Posterior vena cava (tissue), 2 donors: ENCODE measurements at regions of chr1 and their contacts with region 1.

Region 1: GRCh38 chr1:16078925-16079656 is 5.6 kb upstream of the FAM131C start:
- DNase-seq: peak; percentile 89

Region 2: DNA sequence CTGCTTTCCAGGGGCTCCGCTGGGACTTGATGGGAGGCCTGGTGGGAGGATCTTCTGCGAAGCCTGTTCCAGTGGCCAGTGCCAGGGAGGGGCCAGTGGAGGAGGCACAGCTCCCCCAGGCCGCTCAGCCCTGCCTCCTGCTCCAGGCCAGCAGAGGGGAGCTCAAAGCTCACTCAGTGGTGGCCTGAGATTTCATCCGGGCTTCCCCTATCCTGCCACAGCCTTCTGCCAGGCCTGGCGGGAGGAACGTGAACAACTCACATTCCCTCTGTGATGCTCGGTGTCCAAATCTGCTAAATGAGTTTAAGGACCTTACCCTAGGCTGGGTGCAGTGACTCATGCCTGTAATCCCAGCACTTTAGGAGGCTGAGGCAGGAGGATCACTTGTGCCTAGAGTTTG is 32.2 kb before region 1 on chr1:
- intact Hi-C with region 1: no loop called
- DNase-seq: no peak

Region 3: DNA sequence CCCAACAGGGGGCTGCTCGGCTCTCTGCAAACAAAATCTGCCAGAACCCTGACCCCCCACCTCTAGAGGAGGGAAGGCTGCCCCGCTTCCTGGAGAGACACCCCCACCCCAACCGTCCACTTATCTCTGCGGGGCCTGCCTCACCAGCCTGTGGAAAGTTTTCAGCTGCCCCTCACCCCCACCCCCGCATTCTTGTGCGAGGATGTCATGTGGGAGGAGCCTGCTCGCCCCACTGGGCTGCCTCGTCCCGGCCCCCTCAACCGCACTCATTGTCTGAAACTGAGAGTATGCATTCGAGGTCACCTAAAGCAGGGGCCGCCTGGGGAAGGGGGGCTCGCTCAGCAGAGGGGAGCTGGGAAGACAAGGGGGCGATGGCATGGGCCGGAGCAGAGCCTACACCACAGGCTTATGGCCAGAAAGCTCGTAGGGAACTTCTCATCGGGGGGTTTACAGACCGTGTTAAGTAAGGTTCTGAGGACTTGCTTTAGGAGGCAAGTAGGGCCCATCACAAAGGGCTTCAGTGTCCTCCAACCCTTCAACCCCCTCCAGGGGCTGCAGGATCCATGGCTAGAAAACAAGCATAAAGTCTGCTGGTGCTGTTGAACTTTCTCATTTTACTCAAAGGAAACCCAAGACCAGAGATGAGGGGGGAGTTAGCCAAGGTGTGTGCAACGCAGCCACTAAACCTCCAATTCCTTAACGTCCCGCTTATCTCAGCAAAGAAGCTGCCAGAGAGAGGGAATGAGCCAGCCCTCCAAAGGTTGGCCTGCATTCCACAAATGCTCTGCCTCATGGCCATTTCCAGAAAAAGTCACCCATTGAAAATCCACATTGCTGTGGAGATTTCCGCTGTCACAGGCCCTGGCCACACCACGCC is 67.4 kb after region 1 on chr1:
- intact Hi-C with region 1: loop called in 1 of 2 experiments (anchors 5 kb)
- DNase-seq: peak; percentile 91

Region 4: DNA sequence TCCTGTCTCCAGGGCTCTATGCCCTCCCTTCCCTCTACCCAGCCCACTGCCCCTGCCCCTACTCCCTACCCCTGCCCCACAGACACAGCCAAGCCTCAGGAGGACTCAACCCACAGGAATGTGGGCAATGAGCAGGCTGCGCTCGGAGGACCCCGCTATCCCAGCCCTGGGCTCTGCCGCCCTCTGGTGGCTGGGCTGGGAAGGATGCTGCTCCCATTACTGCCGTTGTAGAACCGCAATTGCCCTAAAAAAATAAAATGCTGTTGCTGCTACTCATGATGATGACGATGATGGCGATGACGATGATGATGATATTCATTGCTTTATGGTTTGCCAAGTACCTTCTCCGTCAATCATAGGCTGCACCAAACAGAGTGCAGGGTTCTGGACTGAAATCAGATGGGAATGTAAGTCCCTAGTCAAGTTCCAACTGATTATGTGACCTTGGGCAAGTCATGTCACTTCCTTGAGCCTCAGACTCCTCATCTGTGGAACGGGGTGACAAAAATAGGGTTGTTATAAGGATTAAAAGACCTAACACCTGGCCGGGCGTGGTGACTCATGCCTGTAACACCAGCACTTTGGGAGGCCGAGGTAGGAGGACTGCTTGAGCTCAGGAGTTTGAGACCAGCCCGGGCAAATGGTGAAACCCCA is 108.8 kb after region 1 on chr1:
- intact Hi-C with region 1: loop called (anchors 2 kb)
- DNase-seq: peak; percentile 91

Region 5: DNA sequence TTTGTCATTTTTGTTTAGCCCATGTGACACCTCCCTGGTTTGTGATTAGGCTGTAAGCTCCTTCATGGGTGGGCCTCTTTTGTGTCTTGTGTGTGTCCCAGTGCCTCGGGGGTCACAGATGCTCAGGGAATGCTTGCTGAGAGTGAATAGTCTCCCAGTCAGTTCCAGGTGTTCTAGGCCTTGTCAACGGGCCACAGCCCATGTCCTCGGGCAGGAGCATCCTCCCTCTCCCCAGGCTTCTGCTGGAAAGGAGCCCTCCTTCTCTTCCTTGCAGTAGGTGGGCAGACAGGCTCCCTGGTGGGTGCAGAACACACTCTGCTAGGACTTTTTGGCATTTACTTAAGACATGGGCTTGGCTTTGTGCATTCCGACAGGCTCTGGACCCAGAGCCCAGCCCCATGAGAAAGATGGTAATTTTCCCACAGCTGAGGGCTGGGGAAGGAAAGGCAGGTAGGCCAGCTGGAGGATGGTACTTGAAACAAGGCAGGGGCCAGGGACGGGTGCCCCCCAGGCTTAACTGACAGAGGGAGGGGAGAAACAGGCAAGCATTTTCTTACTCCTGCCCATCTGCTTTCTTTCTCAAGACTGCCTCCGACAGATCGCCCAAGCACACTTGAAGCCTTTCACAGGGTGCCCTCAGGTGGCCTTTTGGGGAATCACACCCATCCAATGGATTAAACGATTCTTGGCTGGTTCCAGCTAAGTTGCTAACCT is 165.0 kb after region 1 on chr1:
- intact Hi-C with region 1: loop called (anchors 1 to 2 kb)
- DNase-seq: peak; percentile 92

Region 6: GRCh38 chr1:16366722-16367257 is 287.7 kb after region 1 on chr1 and contains the start of gene SZRD1:
- intact Hi-C with region 1: loop called (anchors 5 to 10 kb)
- DNase-seq: peak; percentile 99
- total RNA-seq, gene SZRD1: 115 to 167 TPM